Activated T-helper 2 cell treated with anti-CD3 and anti-CD28 coated beads, Interferon-gamma antibody, Interleukin-2, Interleukin-4, amounts not matched to agents 10 μg/mL and 5 μg/mL and 100 μg/mL, durations not matched to agents 14 hours and 24 hours and 36 hours (primary cell): ENCODE measurements at regions of chr5 and their contacts with region 1.

Region 1: GRCh38 chr5:113606298-113607134 is 93.0 kb downstream of the YTHDC2 start:
- DNase-seq: peak; percentile 24
- H3K4me3 Mint-ChIP-seq: no peak overlapping the region
- H3K27ac Mint-ChIP-seq: no peak overlapping the region
- H3K4me1 Mint-ChIP-seq: peaks cover 19% of the 10 kb centered on the region
- H3K27me3 Mint-ChIP-seq: peaks cover 31% of the 10 kb centered on the region

Region 2: GRCh38 chr5:112174959-112175594 is 1431.4 kb before region 1 on chr5:
- intact Hi-C with region 1: loop called (anchors 5 kb)
- DNase-seq: peak; percentile 11
- H3K4me3 Mint-ChIP-seq: no peak overlapping the region
- H3K27ac Mint-ChIP-seq: no peak overlapping the region
- H3K4me1 Mint-ChIP-seq: peaks cover 3% of the 10 kb centered on the region
- H3K27me3 Mint-ChIP-seq: peaks cover 21% of the 10 kb centered on the region

Region 3: GRCh38 chr5:112551419-112552032 is 1055.0 kb before region 1 on chr5:
- intact Hi-C with region 1: loop called (anchors 5 kb)
- DNase-seq: no peak
- H3K4me3 Mint-ChIP-seq: no peak overlapping the region
- H3K27ac Mint-ChIP-seq: no peak overlapping the region
- H3K4me1 Mint-ChIP-seq: no peaks in the 10 kb centered on the region
- H3K27me3 Mint-ChIP-seq: peaks cover 8% of the 10 kb centered on the region

Region 4: GRCh38 chr5:113330533-113331208 is 275.8 kb before region 1 on chr5:
- intact Hi-C with region 1: loop called (anchors 1 kb)
- DNase-seq: no peak
- H3K4me3 Mint-ChIP-seq: no peak overlapping the region
- H3K27ac Mint-ChIP-seq: no peak overlapping the region
- H3K4me1 Mint-ChIP-seq: peaks cover 21% of the 10 kb centered on the region
- H3K27me3 Mint-ChIP-seq: peaks cover 11% of the 10 kb centered on the region

Region 5: DNA sequence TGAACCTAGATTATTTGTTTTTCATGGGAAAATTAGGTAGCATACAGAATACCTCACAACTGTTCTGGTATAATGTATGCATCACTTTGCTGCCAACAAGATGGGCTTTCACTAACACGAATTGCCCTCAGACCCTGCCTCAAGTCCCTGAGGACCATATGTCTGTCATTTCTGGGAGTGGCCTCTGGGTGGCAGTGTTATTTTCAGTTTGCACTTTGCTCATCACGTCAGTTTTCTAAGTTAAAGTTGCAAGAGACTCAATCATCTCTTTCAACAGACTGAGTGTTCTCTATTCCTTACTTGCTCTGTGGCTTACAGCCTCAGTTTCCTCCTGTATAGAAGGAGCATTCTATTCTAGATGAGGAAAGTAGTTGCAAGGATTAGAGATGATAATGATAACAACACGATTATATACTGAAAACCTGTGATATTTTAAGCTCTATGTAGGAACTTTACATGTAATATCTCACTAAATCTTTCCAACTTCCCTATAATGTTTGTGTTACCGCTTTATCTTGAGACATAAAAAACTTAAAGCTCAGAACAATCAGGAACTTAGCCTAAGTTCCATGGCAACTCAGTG is 227.5 kb before region 1 on chr5:
- intact Hi-C with region 1: loop called (anchors 1 kb)
- DNase-seq: peak; percentile 46
- H3K4me3 Mint-ChIP-seq: peak overlapping the region; percentile 3
- H3K27ac Mint-ChIP-seq: no peak overlapping the region
- H3K4me1 Mint-ChIP-seq: peaks cover 37% of the 10 kb centered on the region
- H3K27me3 Mint-ChIP-seq: peaks cover 25% of the 10 kb centered on the region

Region 6: DNA sequence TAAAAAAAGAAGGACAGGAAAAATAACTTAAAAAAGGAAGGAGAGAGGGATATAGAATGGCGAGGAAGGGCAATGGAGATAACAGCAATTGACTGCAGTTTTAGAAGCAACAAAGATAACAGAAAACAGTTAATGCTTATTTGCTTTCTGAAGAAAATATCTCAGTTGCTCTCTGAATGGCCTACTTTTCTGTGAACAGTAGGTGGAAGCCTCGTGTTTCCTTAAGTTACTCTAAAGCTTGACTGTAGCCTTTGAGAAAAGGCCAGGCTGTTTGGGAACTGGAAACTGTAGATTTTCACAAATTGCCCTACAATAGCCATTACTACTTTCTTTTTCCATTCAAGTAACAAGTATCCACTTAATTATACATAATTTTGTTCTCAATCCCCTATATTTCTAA is 311.5 kb after region 1 on chr5:
- intact Hi-C with region 1: no loop called
- DNase-seq: no peak
- H3K4me3 Mint-ChIP-seq: no peak overlapping the region
- H3K27ac Mint-ChIP-seq: no peak overlapping the region
- H3K4me1 Mint-ChIP-seq: no peaks in the 10 kb centered on the region
- H3K27me3 Mint-ChIP-seq: no peaks in the 10 kb centered on the region